Naive thymus-derived CD4-positive, alpha-beta T cell (primary cell): ENCODE measurements at regions of chr17 and their contacts with region 1.

Region 1: DNA sequence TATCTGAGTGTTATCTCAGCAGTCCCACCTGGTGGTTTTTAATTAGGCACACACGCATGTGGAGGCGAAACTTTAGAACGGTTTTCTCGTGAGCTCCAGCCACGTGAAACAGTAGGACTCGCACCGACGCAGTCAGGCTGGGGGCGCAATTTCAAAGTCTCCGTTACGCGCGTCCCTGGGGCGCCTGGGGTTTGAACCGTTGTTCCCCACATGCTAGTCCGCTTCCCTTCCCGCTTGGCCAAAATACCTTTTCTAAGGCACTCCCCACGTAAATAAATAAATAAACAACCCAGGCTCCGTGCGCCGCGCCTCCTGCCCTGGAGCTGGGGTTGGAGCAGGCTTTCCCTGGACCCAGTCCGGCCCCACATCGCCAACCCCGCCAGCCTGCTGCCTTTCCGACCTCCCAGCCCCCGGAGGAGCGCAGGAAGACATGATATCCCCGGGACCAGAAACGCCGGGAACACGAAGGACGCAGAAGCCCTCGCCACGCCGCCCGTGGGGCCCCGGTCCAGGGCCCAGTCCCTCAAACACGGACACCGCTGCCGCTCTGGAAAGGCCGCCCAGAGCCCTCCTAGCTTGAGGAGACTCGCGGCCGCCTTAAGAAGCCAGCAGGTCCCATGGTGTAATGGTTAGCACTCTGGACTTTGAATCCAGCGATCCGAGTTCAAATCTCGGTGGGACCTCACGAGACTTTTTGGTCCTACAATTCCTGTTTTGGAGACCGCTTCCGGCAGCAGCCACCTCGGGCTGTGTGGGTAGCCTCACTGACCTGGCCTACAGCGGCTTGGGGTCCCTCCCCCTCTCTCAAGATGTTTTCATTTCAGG is 18.2 kb downstream of the GNGT2 start:
- DNase-seq: peak in 8 of 9 donors; percentile 75 to 96 (median 94)
- ATAC-seq: peak; percentile 71
- H3K4me3 ChIP-seq: peak overlapping the region; percentile 88
- H3K4me3 Mint-ChIP-seq: peak overlapping the region; percentile 84 to 98 (median 95)
- H3K27ac ChIP-seq: peak overlapping the region; percentile 87
- H3K27ac Mint-ChIP-seq: peak overlapping the region; percentile 96 to 99 (median 98)
- H3K4me1 ChIP-seq: peaks cover 6% of the 10 kb centered on the region in 2 donors
- H3K4me1 Mint-ChIP-seq: peaks cover 16 to 57% (median 27%) of the 10 kb centered on the region in 7 donors
- H3K27me3 ChIP-seq: no peaks in the 10 kb centered on the region
- H3K27me3 Mint-ChIP-seq: peaks cover 0 to 6% (median 0%) of the 10 kb centered on the region in 5 donors

Region 2: DNA sequence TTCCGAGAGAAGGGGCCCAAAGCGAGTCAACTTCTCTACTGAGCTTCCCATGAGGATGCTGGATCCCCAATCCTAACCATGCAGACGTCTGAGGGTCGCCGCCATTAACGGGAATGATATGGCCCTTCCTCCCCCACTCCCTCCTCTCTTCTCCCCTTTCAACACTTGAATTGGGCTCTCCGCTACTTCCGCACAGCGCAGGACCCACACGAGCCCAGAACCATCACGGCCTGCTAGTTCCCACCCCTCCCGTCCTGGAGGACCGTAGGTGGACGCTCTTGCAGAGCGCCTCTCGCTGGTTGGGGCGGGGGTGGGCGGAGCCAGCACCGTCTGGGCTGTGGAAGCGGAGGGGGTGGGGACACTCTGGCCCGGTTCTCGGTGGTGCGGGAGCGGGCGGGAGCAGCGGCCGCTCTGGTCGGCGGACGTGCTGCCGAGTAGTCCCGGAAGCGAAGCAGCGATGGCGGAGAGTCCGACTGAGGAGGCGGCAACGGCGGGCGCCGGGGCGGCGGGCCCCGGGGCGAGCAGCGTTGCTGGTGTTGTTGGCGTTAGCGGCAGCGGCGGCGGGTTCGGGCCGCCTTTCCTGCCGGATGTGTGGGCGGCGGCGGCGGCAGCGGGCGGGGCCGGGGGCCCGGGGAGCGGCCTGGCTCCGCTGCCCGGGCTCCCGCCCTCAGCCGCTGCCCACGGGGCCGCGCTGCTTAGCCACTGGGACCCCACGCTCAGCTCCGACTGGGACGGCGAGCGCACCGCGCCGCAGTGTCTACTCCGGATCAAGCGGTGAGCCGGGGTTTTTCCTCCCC is 283.9 kb before region 1 on chr17 and contains the start of gene UBE2Z:
- CTCF ChIA-PET with region 1: no interaction called
- POLR2A ChIA-PET with region 1: interaction called, 3 read pairs
- intact Hi-C with region 1: loop called in 1 of 2 experiments (anchors 5 kb)
- DNase-seq: peak; percentile 71 to 86 (median 84)
- ATAC-seq: peak; percentile 96
- H3K4me3 ChIP-seq: peak within 1 kb of the TSS; percentile 62
- H3K4me3 Mint-ChIP-seq: peak within 1 kb of the TSS; percentile 90 to 100 (median 96)
- H3K27ac ChIP-seq: peak within 1 kb of the TSS; percentile 93
- H3K27ac Mint-ChIP-seq: peak within 1 kb of the TSS; percentile 95 to 99 (median 98)
- H3K4me1 ChIP-seq: peaks cover 22 to 33% of the 10 kb centered on the region in 2 donors
- H3K4me1 Mint-ChIP-seq: peaks cover 32 to 52% (median 50%) of the 10 kb centered on the region in 7 donors
- H3K27me3 ChIP-seq: no peaks in the 10 kb centered on the region
- H3K27me3 Mint-ChIP-seq: no peaks in the 10 kb centered on the region
- total RNA-seq, gene UBE2Z: 71.6 to 96.6 (median 91.8) TPM

Region 3: GRCh38 chr17:49210158-49211029 is 18.3 kb after region 1 on chr17 and contains the starts of genes ABI3 and GNGT2:
- CTCF ChIA-PET with region 1: interaction called, 5 read pairs
- POLR2A ChIA-PET with region 1: interaction called, 237 read pairs
- intact Hi-C with region 1: loop called (anchors 1 kb)
- DNase-seq: peak; percentile 23 to 70 (median 62)
- ATAC-seq: peak; percentile 88
- H3K4me3 ChIP-seq: peak within 1 kb of the TSS; percentile 84
- H3K4me3 Mint-ChIP-seq: peak within 1 kb of the TSS; percentile 72 to 96 (median 93)
- H3K27ac ChIP-seq: peak within 1 kb of the TSS; percentile 82
- H3K27ac Mint-ChIP-seq: peak within 1 kb of the TSS; percentile 80 to 95 (median 89)
- H3K4me1 ChIP-seq: peaks cover 54 to 58% of the 10 kb centered on the region in 2 donors
- H3K4me1 Mint-ChIP-seq: peaks cover 63 to 81% (median 71%) of the 10 kb centered on the region in 7 donors
- H3K27me3 ChIP-seq: no peaks in the 10 kb centered on the region
- H3K27me3 Mint-ChIP-seq: no peaks in the 10 kb centered on the region
- total RNA-seq, gene ABI3: 8.2 to 57.8 (median 11.0) TPM
- total RNA-seq, gene GNGT2: 2.8 to 16.9 (median 5.1) TPM

Region 4: DNA sequence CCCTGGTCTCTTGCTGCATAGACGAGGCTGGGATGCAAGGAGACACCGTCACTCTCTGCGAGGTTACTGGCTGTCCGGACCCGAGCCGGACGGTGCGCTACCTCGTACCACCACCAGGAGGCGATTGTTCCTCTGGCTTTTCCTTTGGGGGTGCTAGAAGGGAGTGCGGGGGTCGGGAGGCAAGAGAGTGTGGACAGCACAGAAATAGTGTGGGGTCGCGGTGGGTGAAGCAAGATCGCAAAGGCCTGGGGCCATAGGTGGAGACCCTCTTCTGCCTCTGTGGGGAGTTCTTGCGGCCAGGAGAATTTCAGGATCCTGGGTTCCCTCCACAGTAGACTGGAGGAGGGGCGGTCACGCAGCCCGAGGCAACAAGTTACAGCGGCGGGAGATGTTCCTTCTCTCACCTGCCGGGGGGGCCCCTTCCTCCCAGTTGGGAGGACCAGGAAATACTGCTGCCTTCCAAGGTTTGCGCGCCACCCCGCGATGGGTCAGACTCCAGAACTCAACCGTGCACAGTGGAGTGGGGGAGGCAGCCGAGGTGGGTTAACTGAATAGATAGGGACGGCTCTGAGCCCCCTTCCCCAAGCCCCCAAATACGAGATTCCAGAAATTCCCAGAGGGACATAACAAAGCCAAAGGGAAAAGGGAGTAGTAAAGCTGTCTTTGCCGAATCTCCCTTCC is 31.5 kb after region 1 on chr17:
- CTCF ChIA-PET with region 1: interaction called, 67 read pairs
- POLR2A ChIA-PET with region 1: interaction called, 237 read pairs
- intact Hi-C with region 1: loop called (anchors 1 kb)
- DNase-seq: peak in 8 of 9 donors; percentile 33 to 76 (median 52)
- ATAC-seq: peak; percentile 37
- H3K4me3 ChIP-seq: peak overlapping the region; percentile 56
- H3K4me3 Mint-ChIP-seq: peak overlapping the region; percentile 78 to 90 (median 84)
- H3K27ac ChIP-seq: no peak overlapping the region
- H3K27ac Mint-ChIP-seq: peak overlapping the region in 7 of 9 donors; percentile 9 to 80 (median 45)
- H3K4me1 ChIP-seq: peaks cover 32 to 48% of the 10 kb centered on the region in 2 donors
- H3K4me1 Mint-ChIP-seq: peaks cover 12 to 53% (median 32%) of the 10 kb centered on the region in 7 donors
- H3K27me3 ChIP-seq: no peaks in the 10 kb centered on the region
- H3K27me3 Mint-ChIP-seq: peaks cover 0 to 18% (median 0%) of the 10 kb centered on the region in 5 donors

Region 5: DNA sequence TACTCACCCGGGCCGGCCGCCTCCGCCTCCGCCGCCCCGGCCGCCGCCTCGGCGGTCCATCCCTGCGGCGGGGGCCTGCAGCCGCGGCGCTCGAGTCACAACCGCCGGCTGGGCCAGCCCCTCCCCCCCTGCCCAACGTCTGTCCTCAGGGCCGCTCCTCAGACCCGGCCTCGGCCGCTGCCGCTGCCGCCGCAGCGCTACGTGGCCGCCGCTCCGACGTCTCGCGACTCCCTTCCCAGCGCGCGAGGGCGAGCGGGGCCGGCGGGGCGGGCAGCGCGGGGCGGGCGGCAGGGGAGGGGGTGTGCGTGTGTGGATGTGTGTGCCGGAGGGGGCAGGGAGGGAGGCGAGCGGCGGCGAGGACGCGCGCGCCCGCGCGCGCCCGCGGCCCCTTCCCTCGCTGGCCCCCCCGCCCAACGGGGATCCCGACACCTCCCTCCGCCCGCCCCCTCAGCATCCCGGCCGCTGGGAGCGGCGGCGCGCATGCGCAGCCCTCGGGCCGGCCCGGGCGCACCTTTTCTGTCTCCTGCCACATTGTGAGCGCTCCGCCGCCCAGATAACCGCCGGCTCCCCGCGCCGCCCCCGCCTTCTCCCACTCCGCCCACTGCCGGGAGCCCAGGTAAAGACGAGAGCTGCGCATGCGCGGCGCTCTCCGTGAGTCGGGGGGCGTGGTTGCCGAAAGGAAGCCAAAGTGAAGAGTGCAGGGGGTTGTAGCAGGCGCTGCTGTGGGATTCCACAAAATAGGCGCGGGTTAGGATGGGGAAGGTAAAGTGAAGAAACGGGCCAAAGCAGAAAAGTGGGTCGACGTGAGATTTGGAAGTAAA is 170.0 kb after region 1 on chr17 and contains the start of gene ZNF652:
- CTCF ChIA-PET with region 1: no interaction called
- POLR2A ChIA-PET with region 1: interaction called, 10 read pairs
- intact Hi-C with region 1: loop called (anchors 1 to 5 kb)
- DNase-seq: peak; percentile 86 to 98 (median 97)
- ATAC-seq: peak; percentile 81
- H3K4me3 ChIP-seq: peak within 1 kb of the TSS; percentile 67
- H3K4me3 Mint-ChIP-seq: peak within 1 kb of the TSS; percentile 88 to 99 (median 96)
- H3K27ac ChIP-seq: peak within 1 kb of the TSS; percentile 71
- H3K27ac Mint-ChIP-seq: peak within 1 kb of the TSS; percentile 92 to 97 (median 97)
- H3K4me1 ChIP-seq: peaks cover 26 to 33% of the 10 kb centered on the region in 2 donors
- H3K4me1 Mint-ChIP-seq: peaks cover 48 to 58% (median 53%) of the 10 kb centered on the region in 7 donors
- H3K27me3 ChIP-seq: no peaks in the 10 kb centered on the region
- H3K27me3 Mint-ChIP-seq: no peaks in the 10 kb centered on the region
- total RNA-seq, gene ZNF652: 33.8 to 64.4 (median 49.9) TPM

Region 6: DNA sequence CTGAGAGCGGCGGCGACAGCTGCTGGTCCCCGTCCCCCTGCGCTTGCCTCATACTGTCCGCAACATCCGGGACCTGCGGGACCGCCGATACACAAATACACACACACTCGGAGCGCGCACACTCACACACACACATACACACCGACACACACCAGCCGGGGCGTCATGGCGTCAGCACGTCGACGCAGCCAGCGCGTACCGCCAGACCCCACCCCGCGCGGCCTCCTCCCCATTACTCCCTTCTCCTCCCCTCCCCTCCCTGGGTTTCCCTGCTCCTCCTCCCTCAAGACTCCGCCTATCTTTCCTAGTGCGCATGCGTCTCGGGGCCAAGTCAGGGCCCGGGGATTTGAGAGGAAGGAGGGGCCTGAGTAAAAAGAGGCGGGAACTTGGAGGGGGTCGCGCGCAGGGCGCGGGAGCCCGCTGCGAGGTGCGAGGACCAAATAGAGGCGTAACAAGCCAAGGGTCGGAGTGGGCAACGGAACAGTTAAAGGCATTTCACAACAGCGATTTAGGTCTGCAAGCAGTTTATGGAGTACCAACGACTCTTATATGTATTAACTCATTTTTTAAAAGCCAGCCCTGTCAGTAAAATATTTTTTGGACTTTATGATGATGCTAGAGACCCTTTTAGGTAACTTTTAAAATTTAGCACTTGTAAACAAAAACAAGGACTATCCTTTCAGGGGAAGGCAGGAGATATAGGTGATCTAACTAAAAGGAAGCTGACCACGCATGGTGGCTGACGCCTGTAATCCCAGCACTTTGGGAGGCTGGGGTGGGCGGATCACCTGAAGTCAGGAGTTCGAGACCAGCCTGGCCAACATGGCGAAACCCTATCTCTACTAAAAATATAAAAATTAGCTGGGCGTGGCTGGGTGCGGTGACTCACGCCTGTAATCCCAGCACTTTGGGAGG is 486.1 kb after region 1 on chr17 and contains the start of gene SPOP:
- CTCF ChIA-PET with region 1: no interaction called
- POLR2A ChIA-PET with region 1: no interaction called
- intact Hi-C with region 1: loop called (anchors 1 to 10 kb)
- DNase-seq: peak; percentile 94 to 100 (median 99)
- ATAC-seq: peak; percentile 98
- H3K4me3 ChIP-seq: peak within 1 kb of the TSS; percentile 88
- H3K4me3 Mint-ChIP-seq: peak within 1 kb of the TSS; percentile 88 to 98 (median 94)
- H3K27ac ChIP-seq: peak within 1 kb of the TSS; percentile 87
- H3K27ac Mint-ChIP-seq: peak within 1 kb of the TSS; percentile 94 to 100 (median 98)
- H3K4me1 ChIP-seq: peaks cover 25 to 26% of the 10 kb centered on the region in 2 donors
- H3K4me1 Mint-ChIP-seq: peaks cover 36 to 65% (median 47%) of the 10 kb centered on the region in 7 donors
- H3K27me3 ChIP-seq: no peaks in the 10 kb centered on the region
- H3K27me3 Mint-ChIP-seq: peaks cover 0 to 13% (median 0%) of the 10 kb centered on the region in 5 donors
- total RNA-seq, gene SPOP: 59.6 to 94.8 (median 80.9) TPM